ENCODE measurements at regions of chr6 and their contacts with region 1.

Region 1: GRCh38 chr6:7513529-7513928 is 27.9 kb upstream of the DSP start:
- DNase-seq: peak; percentile 14
- H3K4me3 Mint-ChIP-seq: no peak overlapping the region
- H3K27ac Mint-ChIP-seq: no peak overlapping the region
- H3K4me1 Mint-ChIP-seq: peaks cover 31% of the 10 kb centered on the region
- H3K27me3 Mint-ChIP-seq: no peaks in the 10 kb centered on the region
- CTCF ChIP-seq: no peak

Region 2: DNA sequence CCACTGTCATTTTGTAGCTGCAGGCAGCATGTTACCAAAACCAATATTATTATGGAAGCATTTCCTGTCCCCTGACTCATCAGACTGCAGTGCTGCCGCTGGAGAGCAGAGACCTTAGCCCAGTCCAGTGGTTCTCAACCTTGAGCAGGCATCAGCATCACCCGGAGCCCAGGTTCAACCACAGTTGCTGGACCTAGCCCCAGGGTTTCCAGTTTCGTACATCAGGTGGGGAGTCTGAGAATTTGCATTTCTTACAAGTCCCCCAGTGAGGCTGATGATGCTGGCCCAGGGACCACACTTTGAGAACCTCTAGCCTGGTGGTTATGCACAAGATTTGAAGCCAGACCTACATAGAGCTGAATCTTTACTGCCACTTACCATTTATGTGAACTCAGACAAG is 877.7 kb before region 1 on chr6:
- CTCF ChIA-PET with region 1: no interaction called
- POLR2A ChIA-PET with region 1: no interaction called
- intact Hi-C with region 1: no loop called
- DNase-seq: no peak
- H3K4me3 Mint-ChIP-seq: no peak overlapping the region
- H3K27ac Mint-ChIP-seq: no peak overlapping the region
- H3K4me1 Mint-ChIP-seq: peaks cover 12% of the 10 kb centered on the region
- H3K27me3 Mint-ChIP-seq: no peaks in the 10 kb centered on the region
- CTCF ChIP-seq: no peak

Region 3: GRCh38 chr6:7468382-7469081 is 45.0 kb before region 1 on chr6:
- CTCF ChIA-PET with region 1: interaction called, 6 read pairs
- POLR2A ChIA-PET with region 1: interaction called, 10 read pairs
- intact Hi-C with region 1: no loop called
- DNase-seq: peak; percentile 77
- H3K4me3 Mint-ChIP-seq: peak overlapping the region; percentile 72
- H3K27ac Mint-ChIP-seq: peak overlapping the region; percentile 83
- H3K4me1 Mint-ChIP-seq: peaks cover 30% of the 10 kb centered on the region
- H3K27me3 Mint-ChIP-seq: no peaks in the 10 kb centered on the region
- CTCF ChIP-seq: no peak

Region 4: DNA sequence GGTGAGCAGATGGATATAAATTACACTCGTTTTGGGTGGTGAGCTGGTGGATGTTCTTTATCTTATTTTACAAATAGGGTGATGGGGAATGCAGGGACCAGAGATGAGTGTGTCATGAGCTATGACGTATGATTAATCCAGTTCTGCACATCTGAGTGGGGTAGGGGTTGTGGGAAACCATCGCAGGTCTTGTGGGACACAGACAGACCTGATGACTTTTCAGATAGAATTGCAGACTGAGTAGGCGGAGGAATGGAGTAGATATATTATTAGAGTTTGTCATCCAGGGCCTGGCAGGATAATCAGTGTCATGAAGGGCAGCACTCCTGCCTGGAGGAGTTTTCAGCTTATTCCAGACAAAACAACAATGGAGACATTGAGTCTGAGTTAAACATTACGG is 15.0 kb after region 1 on chr6:
- CTCF ChIA-PET with region 1: no interaction called
- POLR2A ChIA-PET with region 1: interaction called, 872 read pairs
- intact Hi-C with region 1: no loop called
- DNase-seq: no peak
- H3K4me3 Mint-ChIP-seq: no peak overlapping the region
- H3K27ac Mint-ChIP-seq: no peak overlapping the region
- H3K4me1 Mint-ChIP-seq: peaks cover 20% of the 10 kb centered on the region
- H3K27me3 Mint-ChIP-seq: no peaks in the 10 kb centered on the region
- CTCF ChIP-seq: no peak

Measured in MCF 10A (cell line).